ENCODE measurements at regions of chr12 and their contacts with region 1.

Region 1: GRCh38 chr12:98741556-98742265 is 96.6 kb downstream of the APAF1 start:
- DNase-seq: no peak
- H3K4me3 Mint-ChIP-seq: no peak overlapping the region
- H3K27ac Mint-ChIP-seq: peak overlapping the region; percentile 10
- H3K4me1 Mint-ChIP-seq: peaks cover 36% of the 10 kb centered on the region
- H3K27me3 Mint-ChIP-seq: peaks cover 12% of the 10 kb centered on the region

Region 2: GRCh38 chr12:98085050-98085755 is 656.5 kb before region 1 on chr12:
- CTCF ChIA-PET with region 1: no interaction called
- POLR2A ChIA-PET with region 1: no interaction called
- DNase-seq: no peak
- H3K4me3 Mint-ChIP-seq: no peak overlapping the region
- H3K27ac Mint-ChIP-seq: no peak overlapping the region
- H3K4me1 Mint-ChIP-seq: no peaks in the 10 kb centered on the region
- H3K27me3 Mint-ChIP-seq: no peaks in the 10 kb centered on the region

Region 3: GRCh38 chr12:98424726-98425401 is 316.8 kb before region 1 on chr12:
- CTCF ChIA-PET with region 1: no interaction called
- POLR2A ChIA-PET with region 1: no interaction called
- DNase-seq: peak; percentile 59
- H3K4me3 Mint-ChIP-seq: no peak overlapping the region
- H3K27ac Mint-ChIP-seq: no peak overlapping the region
- H3K4me1 Mint-ChIP-seq: peaks cover 3% of the 10 kb centered on the region
- H3K27me3 Mint-ChIP-seq: peaks cover 6% of the 10 kb centered on the region

Region 4: GRCh38 chr12:98644711-98645402 is 96.9 kb before region 1 on chr12 and contains the starts of genes APAF1 and IKBIP:
- CTCF ChIA-PET with region 1: no interaction called
- POLR2A ChIA-PET with region 1: no interaction called
- DNase-seq: peak; percentile 97
- H3K4me3 Mint-ChIP-seq: peak within 1 kb of the TSS; percentile 98
- H3K27ac Mint-ChIP-seq: peak within 1 kb of the TSS; percentile 95
- H3K4me1 Mint-ChIP-seq: peaks cover 39% of the 10 kb centered on the region
- H3K27me3 Mint-ChIP-seq: no peaks in the 10 kb centered on the region
- total RNA-seq, gene APAF1: 28.3 to 31.5 TPM
- total RNA-seq, gene IKBIP: 18.4 to 18.8 TPM

Region 5: GRCh38 chr12:98752726-98753125 is 11.0 kb after region 1 on chr12:
- CTCF ChIA-PET with region 1: interaction called, 11 read pairs
- POLR2A ChIA-PET with region 1: no interaction called
- DNase-seq: no peak
- H3K4me3 Mint-ChIP-seq: no peak overlapping the region
- H3K27ac Mint-ChIP-seq: no peak overlapping the region
- H3K4me1 Mint-ChIP-seq: peaks cover 8% of the 10 kb centered on the region
- H3K27me3 Mint-ChIP-seq: peaks cover under 1% of the 10 kb centered on the region

Region 6: GRCh38 chr12:98780261-98780660 is 38.5 kb after region 1 on chr12:
- CTCF ChIA-PET with region 1: no interaction called
- POLR2A ChIA-PET with region 1: no interaction called
- DNase-seq: no peak
- H3K4me3 Mint-ChIP-seq: no peak overlapping the region
- H3K27ac Mint-ChIP-seq: no peak overlapping the region
- H3K4me1 Mint-ChIP-seq: no peaks in the 10 kb centered on the region
- H3K27me3 Mint-ChIP-seq: peaks cover 10% of the 10 kb centered on the region